T-cell (primary cell): ENCODE measurements at regions of chr7 and their contacts with region 1.

Region 1: DNA sequence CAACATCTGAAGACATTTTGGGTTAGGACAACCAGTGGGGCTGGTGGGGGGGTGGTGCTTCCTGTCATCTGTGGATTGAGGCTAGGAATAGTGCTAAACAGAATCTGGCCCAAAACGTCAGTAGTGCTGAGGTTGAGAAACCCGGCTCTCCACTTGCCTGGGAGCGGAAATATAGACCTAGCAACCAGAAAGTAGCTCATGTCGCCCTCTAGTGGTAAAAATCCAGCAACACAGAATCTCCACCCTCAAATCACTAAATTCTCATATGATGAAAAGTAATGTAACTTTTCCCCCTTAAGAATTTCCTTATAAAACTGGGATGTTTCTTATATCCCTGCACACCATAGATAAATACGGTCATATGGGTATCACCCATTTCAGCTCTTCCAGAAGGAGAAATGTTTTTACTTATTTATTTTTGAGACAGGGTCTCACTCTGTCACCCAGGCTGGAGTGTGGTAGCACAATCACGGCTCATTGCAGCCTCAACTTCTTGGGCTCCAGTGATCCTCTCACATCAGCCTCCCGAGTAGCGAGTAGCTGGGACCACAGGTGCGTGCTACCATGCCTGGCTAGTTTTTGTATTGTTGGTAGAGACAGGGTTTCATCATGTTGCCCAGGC is 34.4 kb downstream of the ZC3HAV1 start:
- DNase-seq: peak; percentile 30 to 91 (median 65)
- ATAC-seq: peak; percentile 82 to 86 (median 84)
- H3K4me3 ChIP-seq: no peak overlapping the region
- H3K4me3 Mint-ChIP-seq: peak overlapping the region; percentile 30 to 60 (median 41)
- H3K27ac ChIP-seq: peak overlapping the region; percentile 67
- H3K27ac Mint-ChIP-seq: peak overlapping the region; percentile 82 to 88
- H3K4me1 ChIP-seq: peaks cover 36 to 54% of the 10 kb centered on the region in 2 experiments
- H3K4me1 Mint-ChIP-seq: peaks cover 67 to 74% (median 73%) of the 10 kb centered on the region in 3 donors
- H3K27me3 ChIP-seq: no peaks in the 10 kb centered on the region
- H3K27me3 Mint-ChIP-seq: no peaks in the 10 kb centered on the region

Region 2: DNA sequence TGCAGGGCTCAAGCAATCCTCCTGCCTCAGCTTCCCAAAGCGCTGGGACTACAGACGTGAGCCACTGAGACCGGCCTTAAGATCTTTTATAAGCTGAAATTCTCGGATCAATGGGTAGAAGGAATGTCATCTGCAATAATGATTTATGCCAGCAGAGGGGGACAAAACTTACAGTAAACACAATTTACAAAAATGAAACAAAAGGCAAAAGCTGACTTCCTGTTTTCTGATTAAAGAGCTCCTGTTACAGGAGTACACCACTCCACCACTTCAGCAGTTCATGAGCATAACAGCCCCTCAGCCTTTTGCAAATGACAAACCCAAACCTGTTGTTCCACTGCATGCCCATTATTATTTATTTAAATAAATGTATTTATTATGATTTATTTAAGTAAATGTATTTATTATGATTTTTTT is 188.6 kb before region 1 on chr7:
- CTCF ChIA-PET with region 1: interaction called, 7 to 35 read pairs
- POLR2A ChIA-PET with region 1: no interaction called
- DNase-seq: peak in 23 of 35 experiments; percentile 1 to 86 (median 29)
- ATAC-seq: peak; percentile 86 to 92 (median 88)
- H3K4me3 ChIP-seq: no peak overlapping the region
- H3K4me3 Mint-ChIP-seq: peak overlapping the region in 1 of 3 donors; percentile 22
- H3K27ac ChIP-seq: no peak overlapping the region
- H3K27ac Mint-ChIP-seq: peak overlapping the region; percentile 69 to 83
- H3K4me1 ChIP-seq: peaks cover 3 to 9% of the 10 kb centered on the region in 2 experiments
- H3K4me1 Mint-ChIP-seq: peaks cover 17 to 21% (median 19%) of the 10 kb centered on the region in 3 donors
- H3K27me3 ChIP-seq: peaks cover 0 to 4% of the 10 kb centered on the region in 2 experiments
- H3K27me3 Mint-ChIP-seq: peaks cover 0 to 3% of the 10 kb centered on the region in 2 donors

Region 3: DNA sequence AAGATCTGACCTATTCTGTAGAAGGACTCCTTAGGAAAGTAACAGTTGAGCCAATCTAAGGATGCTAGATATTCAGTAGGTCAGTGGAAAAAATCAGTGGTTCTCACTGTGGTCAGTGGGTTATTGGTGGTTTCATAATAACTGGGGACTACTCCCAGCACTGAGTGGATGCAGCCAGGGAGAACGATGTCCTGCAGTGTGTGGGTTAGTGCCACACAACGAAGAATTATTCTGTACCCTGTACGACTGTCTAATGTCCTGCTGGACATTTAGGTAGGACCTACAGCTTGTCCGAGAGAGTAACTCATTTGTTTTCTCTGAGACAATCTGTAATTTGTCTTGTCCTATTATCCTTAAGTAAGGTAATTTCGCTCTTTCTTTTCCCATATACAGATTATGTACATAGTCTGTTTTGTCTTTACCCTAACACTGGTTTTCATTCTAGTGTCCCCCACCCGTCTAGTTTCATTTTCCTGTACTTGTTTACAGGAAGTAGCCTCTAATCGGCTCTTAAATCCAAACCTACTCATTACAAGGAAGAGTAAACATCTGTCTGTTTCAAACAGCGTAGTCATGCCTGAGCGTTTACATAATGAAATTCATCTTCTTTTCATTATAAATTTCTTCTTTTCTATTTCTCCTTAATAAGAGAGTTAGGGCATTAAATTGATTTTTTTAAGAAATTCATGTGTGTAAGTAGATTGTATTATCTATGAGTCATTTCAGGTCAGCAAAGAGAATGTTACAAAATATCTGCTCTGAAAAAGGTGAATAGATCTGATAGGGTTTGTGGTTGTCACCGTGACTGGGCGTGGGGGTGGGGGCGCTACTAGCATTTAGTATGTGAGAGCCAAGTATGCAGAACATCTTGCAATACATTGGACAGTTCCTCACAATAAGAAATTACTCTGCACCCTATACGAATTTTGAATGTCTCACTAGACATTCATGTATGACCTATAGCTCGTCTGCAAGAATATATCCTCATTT is 31.0 kb before region 1 on chr7:
- CTCF ChIA-PET with region 1: interaction called, 6 to 11 read pairs
- POLR2A ChIA-PET with region 1: interaction called, 7 to 8 read pairs
- DNase-seq: peak; percentile 43 to 81 (median 72)
- ATAC-seq: peak; percentile 56 to 73 (median 65)
- H3K4me3 ChIP-seq: no peak overlapping the region
- H3K4me3 Mint-ChIP-seq: peak overlapping the region; percentile 5 to 60 (median 49)
- H3K27ac ChIP-seq: peak overlapping the region; percentile 76
- H3K27ac Mint-ChIP-seq: peak overlapping the region; percentile 76 to 91
- H3K4me1 ChIP-seq: peaks cover 24 to 27% of the 10 kb centered on the region in 2 experiments
- H3K4me1 Mint-ChIP-seq: peaks cover 72 to 78% (median 76%) of the 10 kb centered on the region in 3 donors
- H3K27me3 ChIP-seq: no peaks in the 10 kb centered on the region
- H3K27me3 Mint-ChIP-seq: no peaks in the 10 kb centered on the region

Region 4: GRCh38 chr7:139086454-139086853 is 11.3 kb after region 1 on chr7:
- CTCF ChIA-PET with region 1: interaction called, 5 to 21 read pairs
- POLR2A ChIA-PET with region 1: interaction called, 4 read pairs
- DNase-seq: no peak
- ATAC-seq: no peak
- H3K4me3 ChIP-seq: no peak overlapping the region
- H3K4me3 Mint-ChIP-seq: peak overlapping the region in 1 of 3 donors; percentile 64
- H3K27ac ChIP-seq: no peak overlapping the region
- H3K27ac Mint-ChIP-seq: peak overlapping the region; percentile 70 to 90
- H3K4me1 ChIP-seq: peaks cover 63 to 73% of the 10 kb centered on the region in 2 experiments
- H3K4me1 Mint-ChIP-seq: peaks cover 84 to 91% (median 90%) of the 10 kb centered on the region in 3 donors
- H3K27me3 ChIP-seq: no peaks in the 10 kb centered on the region
- H3K27me3 Mint-ChIP-seq: no peaks in the 10 kb centered on the region

Region 5: DNA sequence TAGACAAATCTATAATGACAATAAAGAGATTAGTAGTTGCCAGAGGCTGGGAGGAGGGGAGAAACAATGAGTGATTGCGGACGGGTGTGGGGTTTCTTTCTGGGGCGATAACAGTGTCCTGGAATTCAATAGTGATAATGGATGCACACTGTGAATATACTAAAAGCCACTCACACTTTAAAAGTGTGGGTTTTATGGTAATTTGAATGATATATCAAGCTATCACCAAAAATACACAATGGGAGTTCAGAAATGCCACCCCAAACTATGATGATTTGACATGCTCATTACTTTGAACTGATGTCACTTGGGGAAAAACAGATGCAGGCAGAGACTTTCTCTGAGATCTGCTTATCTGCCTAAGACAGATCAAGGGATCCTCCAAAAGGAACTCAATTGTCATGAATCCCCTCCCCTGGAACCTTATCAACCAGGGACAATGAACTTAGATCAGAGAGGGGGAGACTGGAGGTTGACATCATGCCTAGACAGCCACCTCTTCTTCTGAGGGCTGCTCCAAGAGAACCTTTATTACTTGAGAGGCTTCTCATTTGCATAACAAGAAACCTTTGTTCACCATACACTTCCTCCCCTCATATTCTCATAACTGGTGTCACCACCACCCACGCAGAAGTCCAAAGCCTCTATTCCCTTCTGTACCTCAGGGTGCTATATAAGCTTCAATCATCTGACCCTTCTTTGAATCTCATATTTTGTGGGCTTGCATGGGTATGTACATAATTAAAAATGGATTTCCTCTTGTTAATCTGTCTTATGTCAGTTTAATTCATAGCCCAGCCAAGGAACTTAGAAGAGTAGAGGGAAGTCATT is 49.2 kb after region 1 on chr7:
- CTCF ChIA-PET with region 1: interaction called, 10 to 14 read pairs
- POLR2A ChIA-PET with region 1: no interaction called
- DNase-seq: no peak
- ATAC-seq: no peak
- H3K4me3 ChIP-seq: no peak overlapping the region
- H3K4me3 Mint-ChIP-seq: no peak overlapping the region
- H3K27ac ChIP-seq: no peak overlapping the region
- H3K27ac Mint-ChIP-seq: no peak overlapping the region
- H3K4me1 ChIP-seq: peaks cover 2 to 4% of the 10 kb centered on the region in 2 experiments
- H3K4me1 Mint-ChIP-seq: peaks cover 7 to 31% (median 18%) of the 10 kb centered on the region in 3 donors
- H3K27me3 ChIP-seq: no peaks in the 10 kb centered on the region
- H3K27me3 Mint-ChIP-seq: no peaks in the 10 kb centered on the region